Activated CD8-positive, alpha-beta T cell treated with anti-CD3 and anti-CD28 coated beads for 36 hours (primary cell): ENCODE measurements at regions of chr1 and their contacts with region 1.

Region 1: GRCh38 chr1:61157468-61157987 is 75.2 kb downstream of the NFIA start:
- DNase-seq: peak; percentile 26
- ATAC-seq: peak; percentile 58
- H3K4me3 Mint-ChIP-seq: no peak overlapping the region
- H3K27ac Mint-ChIP-seq: no peak overlapping the region
- H3K4me1 Mint-ChIP-seq: peaks cover 25% of the 10 kb centered on the region
- H3K27me3 Mint-ChIP-seq: peaks cover 2% of the 10 kb centered on the region
- CTCF ChIP-seq: no peak

Region 2: GRCh38 chr1:60936163-60936562 is 221.4 kb before region 1 on chr1:
- CTCF ChIA-PET with region 1: no interaction called
- POLR2A ChIA-PET with region 1: no interaction called
- intact Hi-C with region 1: no loop called
- DNase-seq: no peak
- ATAC-seq: no peak
- H3K4me3 Mint-ChIP-seq: no peak overlapping the region
- H3K27ac Mint-ChIP-seq: no peak overlapping the region
- H3K4me1 Mint-ChIP-seq: peaks cover 3% of the 10 kb centered on the region
- H3K27me3 Mint-ChIP-seq: peaks cover 8% of the 10 kb centered on the region
- CTCF ChIP-seq: no peak

Region 3: GRCh38 chr1:61077676-61078541 is 79.6 kb before region 1 on chr1:
- CTCF ChIA-PET with region 1: no interaction called
- POLR2A ChIA-PET with region 1: no interaction called
- intact Hi-C with region 1: loop called (anchors 5 kb)
- DNase-seq: peak; percentile 97
- ATAC-seq: peak; percentile 84
- H3K4me3 Mint-ChIP-seq: peak overlapping the region; percentile 91
- H3K27ac Mint-ChIP-seq: peak overlapping the region; percentile 90
- H3K4me1 Mint-ChIP-seq: peaks cover 45% of the 10 kb centered on the region
- H3K27me3 Mint-ChIP-seq: peaks cover 3% of the 10 kb centered on the region
- CTCF ChIP-seq: no peak

Region 4: GRCh38 chr1:61210435-61211154 is 53.1 kb after region 1 on chr1:
- CTCF ChIA-PET with region 1: no interaction called
- POLR2A ChIA-PET with region 1: no interaction called
- intact Hi-C with region 1: no loop called
- DNase-seq: no peak
- ATAC-seq: no peak
- H3K4me3 Mint-ChIP-seq: no peak overlapping the region
- H3K27ac Mint-ChIP-seq: no peak overlapping the region
- H3K4me1 Mint-ChIP-seq: peaks cover 7% of the 10 kb centered on the region
- H3K27me3 Mint-ChIP-seq: no peaks in the 10 kb centered on the region
- CTCF ChIP-seq: no peak